ENCODE measurements at regions of chr2 and their contacts with region 1.

Region 1: DNA sequence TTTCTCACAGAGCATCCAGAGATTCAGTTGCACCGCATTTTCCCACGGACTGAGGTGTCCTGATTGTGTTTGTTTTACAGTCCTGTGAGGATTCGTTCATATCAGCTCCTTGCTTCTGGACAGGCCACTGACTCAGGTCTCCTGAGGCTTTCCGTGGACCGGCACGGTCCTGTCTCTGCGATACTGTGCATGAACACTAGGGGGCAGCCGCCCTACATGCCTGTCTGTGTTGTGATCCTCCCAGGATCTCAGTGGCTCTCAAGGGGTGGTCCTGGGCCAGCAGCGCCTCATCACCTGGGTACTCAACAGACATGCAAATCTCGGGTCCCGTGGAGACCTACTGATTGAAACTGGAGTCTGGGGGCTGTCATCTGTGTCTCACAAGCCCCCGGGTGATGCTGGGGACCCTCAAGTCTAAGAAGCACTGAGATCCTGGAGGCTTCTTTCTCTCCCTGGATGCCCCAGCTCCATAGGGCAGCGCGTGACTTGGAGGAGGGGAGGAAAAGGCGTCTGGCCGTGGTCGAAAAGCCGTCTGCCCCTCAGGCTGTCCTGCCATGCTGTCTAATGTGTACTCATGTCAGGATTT is 28.9 kb downstream of the IL1R2 start:
- DNase-seq: peak; percentile 63 to 91 (median 80)
- ATAC-seq: peak; percentile 99
- H3K4me3 ChIP-seq: no peak overlapping the region
- H3K4me3 Mint-ChIP-seq: no peak overlapping the region
- H3K27ac ChIP-seq: no peak overlapping the region
- H3K27ac Mint-ChIP-seq: no peak overlapping the region
- H3K4me1 ChIP-seq: peaks cover 4% of the 10 kb centered on the region
- H3K4me1 Mint-ChIP-seq: no peaks in the 10 kb centered on the region
- H3K27me3 ChIP-seq: no peaks in the 10 kb centered on the region
- H3K27me3 Mint-ChIP-seq: no peaks in the 10 kb centered on the region
- CTCF ChIP-seq: peak; percentile 93

Region 2: GRCh38 chr2:101993772-101994171 is 26.9 kb before region 1 on chr2:
- CTCF ChIA-PET with region 1: interaction called, 11 read pairs
- POLR2A ChIA-PET with region 1: no interaction called
- intact Hi-C with region 1: no loop called
- DNase-seq: no peak
- ATAC-seq: no peak
- H3K4me3 ChIP-seq: no peak overlapping the region
- H3K4me3 Mint-ChIP-seq: no peak overlapping the region
- H3K27ac ChIP-seq: no peak overlapping the region
- H3K27ac Mint-ChIP-seq: no peak overlapping the region
- H3K4me1 ChIP-seq: peaks cover 4% of the 10 kb centered on the region
- H3K4me1 Mint-ChIP-seq: peaks cover 2% of the 10 kb centered on the region
- H3K27me3 ChIP-seq: peaks cover 0 to 9% of the 10 kb centered on the region in 2 experiments
- H3K27me3 Mint-ChIP-seq: peaks cover 17% of the 10 kb centered on the region
- CTCF ChIP-seq: no peak

Region 3: DNA sequence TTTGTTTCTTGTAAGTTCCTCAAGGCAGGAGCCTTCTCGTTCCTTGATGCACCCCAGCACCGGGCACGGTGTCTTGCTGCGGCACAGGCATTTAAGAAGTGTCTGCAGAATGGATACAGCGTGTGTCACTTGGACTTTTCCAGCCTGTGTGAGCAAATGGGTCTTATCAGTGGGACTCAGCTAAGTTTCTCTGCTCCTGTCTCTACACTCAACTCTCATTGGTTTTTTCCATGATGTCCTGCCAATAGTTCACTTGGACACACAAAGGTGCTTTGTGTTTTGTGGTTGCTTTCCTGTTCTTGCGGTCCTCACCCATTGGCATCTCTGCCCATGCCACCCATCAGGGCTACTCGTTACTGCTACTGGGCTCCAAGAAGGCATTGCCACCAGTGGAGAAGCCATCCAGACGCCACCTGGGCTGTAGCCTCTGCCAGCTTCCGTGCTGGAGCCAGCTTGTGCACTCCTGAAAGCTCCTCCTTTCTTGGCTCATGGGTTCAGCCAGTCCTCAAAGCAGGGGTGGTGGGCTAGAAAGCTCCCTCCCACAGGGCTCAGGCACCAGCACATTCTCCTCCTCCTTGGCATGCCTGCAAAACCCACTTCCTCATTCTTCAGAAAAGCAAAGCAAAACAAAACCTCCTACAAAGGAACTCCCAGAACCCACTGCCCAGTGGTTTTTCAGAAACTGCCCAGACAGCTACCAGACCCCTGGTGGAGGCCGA is 12.5 kb after region 1 on chr2:
- CTCF ChIA-PET with region 1: interaction called, 16 read pairs
- POLR2A ChIA-PET with region 1: no interaction called
- intact Hi-C with region 1: no loop called
- DNase-seq: peak in 2 of 9 experiments; percentile 27 to 51
- ATAC-seq: peak; percentile 38
- H3K4me3 ChIP-seq: no peak overlapping the region
- H3K4me3 Mint-ChIP-seq: peak overlapping the region; percentile 58
- H3K27ac ChIP-seq: no peak overlapping the region
- H3K27ac Mint-ChIP-seq: peak overlapping the region; percentile 60
- H3K4me1 ChIP-seq: peaks cover 23% of the 10 kb centered on the region
- H3K4me1 Mint-ChIP-seq: peaks cover 31% of the 10 kb centered on the region
- H3K27me3 ChIP-seq: no peaks in the 10 kb centered on the region
- H3K27me3 Mint-ChIP-seq: no peaks in the 10 kb centered on the region
- CTCF ChIP-seq: no peak

Region 4: GRCh38 chr2:102235491-102235890 is 214.8 kb after region 1 on chr2:
- CTCF ChIA-PET with region 1: interaction called, 175 read pairs
- POLR2A ChIA-PET with region 1: interaction called, 3 read pairs
- intact Hi-C with region 1: loop called in 1 of 2 experiments (anchors 1 kb)
- DNase-seq: peak in 3 of 9 experiments; percentile 15 to 47 (median 39)
- ATAC-seq: peak; percentile 40
- H3K4me3 ChIP-seq: no peak overlapping the region
- H3K4me3 Mint-ChIP-seq: no peak overlapping the region
- H3K27ac ChIP-seq: no peak overlapping the region
- H3K27ac Mint-ChIP-seq: no peak overlapping the region
- H3K4me1 ChIP-seq: no peaks in the 10 kb centered on the region
- H3K4me1 Mint-ChIP-seq: peaks cover 2% of the 10 kb centered on the region
- H3K27me3 ChIP-seq: no peaks in the 10 kb centered on the region
- H3K27me3 Mint-ChIP-seq: no peaks in the 10 kb centered on the region
- CTCF ChIP-seq: peak; percentile 20

Region 5: GRCh38 chr2:102355526-102356380 is 335.1 kb after region 1 on chr2 and contains the start of gene IL18R1:
- CTCF ChIA-PET with region 1: interaction called, 8 read pairs
- POLR2A ChIA-PET with region 1: no interaction called
- intact Hi-C with region 1: loop called (anchors 1 to 5 kb)
- DNase-seq: peak; percentile 22 to 87 (median 63)
- ATAC-seq: peak; percentile 79
- H3K4me3 ChIP-seq: peak within 1 kb of the TSS; percentile 91 to 97
- H3K4me3 Mint-ChIP-seq: peak within 1 kb of the TSS; percentile 95
- H3K27ac ChIP-seq: peak within 1 kb of the TSS; percentile 63 to 84
- H3K27ac Mint-ChIP-seq: peak within 1 kb of the TSS; percentile 96
- H3K4me1 ChIP-seq: peaks cover 14% of the 10 kb centered on the region
- H3K4me1 Mint-ChIP-seq: peaks cover 40% of the 10 kb centered on the region
- H3K27me3 ChIP-seq: no peaks in the 10 kb centered on the region
- H3K27me3 Mint-ChIP-seq: no peaks in the 10 kb centered on the region
- CTCF ChIP-seq: peak; percentile 79
- total RNA-seq, gene IL18R1: 7.0 to 7.7 TPM

Measured in CD8-positive, alpha-beta T cell (primary cell).